ENCODE measurements at regions of chr2 and their contacts with region 1.

Region 1: GRCh38 chr2:75640621-75641121 is 5.9 kb upstream of the MRPL19 start:
- DNase-seq: no peak

Region 2: DNA sequence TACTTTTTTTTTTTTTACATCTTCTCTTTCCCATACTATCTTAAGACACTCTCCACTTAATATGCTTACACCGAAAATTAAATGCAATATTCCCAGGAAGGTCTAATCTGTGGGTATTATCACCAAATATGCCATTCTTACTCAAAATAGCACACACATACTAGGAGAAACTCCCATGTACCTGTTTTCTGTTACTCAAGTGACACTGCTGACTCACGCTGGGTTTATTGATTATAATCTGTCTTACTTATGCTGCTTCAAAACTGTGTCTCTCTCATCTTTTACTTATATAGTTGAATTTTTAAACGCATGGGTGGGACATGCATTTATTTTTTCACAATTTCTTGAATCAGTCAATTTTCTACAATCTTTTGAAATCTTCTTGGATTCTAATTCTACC is 35.8 kb after region 1 on chr2:
- intact Hi-C with region 1: loop called (anchors 5 kb)
- DNase-seq: no peak